PC-3 (cell line): ENCODE measurements at regions of chr19 and their contacts with region 1.

Region 1: GRCh38 chr19:11137542-11138384 is 17.8 kb downstream of the SPC24 start:
- DNase-seq: peak; percentile 99
- ATAC-seq: peak; percentile 32
- H3K4me3 ChIP-seq: peak overlapping the region; percentile 47
- H3K27ac ChIP-seq: peak overlapping the region; percentile 90
- H3K4me1 ChIP-seq: peaks cover 43% of the 10 kb centered on the region
- H3K27me3 ChIP-seq: no peaks in the 10 kb centered on the region
- CTCF ChIP-seq: peak; percentile 96

Region 2: DNA sequence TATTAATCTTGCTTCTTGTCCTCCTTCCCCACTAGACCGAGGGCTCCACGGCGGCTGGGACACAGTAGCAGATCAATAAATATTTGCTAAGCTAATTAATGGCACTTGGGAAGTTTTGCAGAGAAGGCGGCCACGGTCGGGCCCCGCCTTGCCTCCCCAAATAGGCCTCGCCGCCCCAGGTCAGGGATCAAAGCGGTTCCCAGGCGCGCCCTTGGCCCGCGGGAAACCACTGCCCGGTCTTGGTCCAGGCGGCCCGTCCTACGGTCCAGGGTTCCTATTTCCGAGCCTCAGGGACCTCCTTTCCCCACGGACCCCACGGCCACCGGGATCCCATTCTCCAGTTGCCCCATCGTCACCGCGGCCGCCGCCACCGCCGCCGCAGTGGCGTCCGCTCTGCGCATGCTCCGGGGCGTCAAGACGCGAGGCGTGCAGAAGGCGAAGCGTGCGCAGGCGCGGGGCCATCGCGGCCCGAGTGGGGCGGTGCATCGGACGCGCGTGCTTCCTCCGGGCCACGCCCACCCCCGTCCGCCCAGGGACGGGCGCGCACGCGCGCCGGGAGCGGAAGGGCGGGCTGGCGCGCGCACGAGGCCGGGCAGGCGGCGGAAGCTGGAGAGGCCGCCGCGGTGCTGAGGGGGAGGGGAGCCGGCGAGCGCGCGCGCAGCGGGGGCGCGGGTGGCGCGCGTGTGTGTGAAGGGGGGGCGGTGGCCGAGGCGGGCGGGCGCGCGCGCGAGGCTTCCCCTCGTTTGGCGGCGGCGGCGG is 177.3 kb before region 1 on chr19 and contains the start of gene SMARCA4:
- CTCF ChIA-PET with region 1: no interaction called
- POLR2A ChIA-PET with region 1: no interaction called
- intact Hi-C with region 1: no loop called
- DNase-seq: peak; percentile 99
- ATAC-seq: peak; percentile 84
- H3K4me3 ChIP-seq: peak within 1 kb of the TSS; percentile 82
- H3K27ac ChIP-seq: peak within 1 kb of the TSS; percentile 45
- H3K4me1 ChIP-seq: peaks cover 23% of the 10 kb centered on the region
- H3K27me3 ChIP-seq: no peaks in the 10 kb centered on the region
- CTCF ChIP-seq: no peak
- total RNA-seq, gene SMARCA4: 197 and 316 TPM in 2 replicates

Region 3: GRCh38 chr19:11155373-11156120 is 17.8 kb after region 1 on chr19 and contains the start of gene SPC24:
- CTCF ChIA-PET with region 1: interaction called, 6 read pairs
- POLR2A ChIA-PET with region 1: interaction called, 7 read pairs
- intact Hi-C with region 1: loop called (anchors 1 kb)
- DNase-seq: peak; percentile 99
- ATAC-seq: peak; percentile 94
- H3K4me3 ChIP-seq: peak within 1 kb of the TSS; percentile 94
- H3K27ac ChIP-seq: peak within 1 kb of the TSS; percentile 35
- H3K4me1 ChIP-seq: peaks cover 28% of the 10 kb centered on the region
- H3K27me3 ChIP-seq: no peaks in the 10 kb centered on the region
- CTCF ChIP-seq: no peak
- total RNA-seq, gene SPC24: 136 and 142 TPM in 2 replicates

Region 4: DNA sequence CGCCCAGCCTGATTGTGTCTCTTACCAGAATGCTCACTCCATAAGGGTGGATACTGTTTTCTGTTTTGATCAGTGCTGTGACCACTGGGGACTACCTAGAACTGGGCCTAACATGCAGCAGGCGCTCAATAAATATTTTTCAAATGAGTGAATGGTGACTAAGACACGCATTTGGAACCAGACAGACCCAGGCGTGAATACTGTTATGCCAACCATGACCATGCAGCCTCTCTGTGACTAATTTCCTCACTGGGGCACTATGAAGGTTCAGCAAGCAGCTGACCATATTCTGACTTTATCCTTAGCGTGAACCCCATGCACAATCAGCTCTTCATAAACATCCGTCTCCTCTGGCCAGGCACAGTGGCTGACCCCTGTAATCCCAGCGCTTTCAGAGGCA is 30.8 kb after region 1 on chr19:
- CTCF ChIA-PET with region 1: no interaction called
- POLR2A ChIA-PET with region 1: no interaction called
- intact Hi-C with region 1: loop called (anchors 1 kb)
- DNase-seq: peak; percentile 99
- ATAC-seq: peak; percentile 97
- H3K4me3 ChIP-seq: no peak overlapping the region
- H3K27ac ChIP-seq: peak overlapping the region; percentile 76
- H3K4me1 ChIP-seq: peaks cover 18% of the 10 kb centered on the region
- H3K27me3 ChIP-seq: no peaks in the 10 kb centered on the region
- CTCF ChIP-seq: no peak

Region 5: GRCh38 chr19:11187441-11187840 is 49.7 kb after region 1 on chr19:
- CTCF ChIA-PET with region 1: no interaction called
- POLR2A ChIA-PET with region 1: no interaction called
- intact Hi-C with region 1: no loop called
- DNase-seq: no peak
- ATAC-seq: no peak
- H3K4me3 ChIP-seq: no peak overlapping the region
- H3K27ac ChIP-seq: no peak overlapping the region
- H3K4me1 ChIP-seq: no peaks in the 10 kb centered on the region
- H3K27me3 ChIP-seq: no peaks in the 10 kb centered on the region
- CTCF ChIP-seq: no peak

Region 6: DNA sequence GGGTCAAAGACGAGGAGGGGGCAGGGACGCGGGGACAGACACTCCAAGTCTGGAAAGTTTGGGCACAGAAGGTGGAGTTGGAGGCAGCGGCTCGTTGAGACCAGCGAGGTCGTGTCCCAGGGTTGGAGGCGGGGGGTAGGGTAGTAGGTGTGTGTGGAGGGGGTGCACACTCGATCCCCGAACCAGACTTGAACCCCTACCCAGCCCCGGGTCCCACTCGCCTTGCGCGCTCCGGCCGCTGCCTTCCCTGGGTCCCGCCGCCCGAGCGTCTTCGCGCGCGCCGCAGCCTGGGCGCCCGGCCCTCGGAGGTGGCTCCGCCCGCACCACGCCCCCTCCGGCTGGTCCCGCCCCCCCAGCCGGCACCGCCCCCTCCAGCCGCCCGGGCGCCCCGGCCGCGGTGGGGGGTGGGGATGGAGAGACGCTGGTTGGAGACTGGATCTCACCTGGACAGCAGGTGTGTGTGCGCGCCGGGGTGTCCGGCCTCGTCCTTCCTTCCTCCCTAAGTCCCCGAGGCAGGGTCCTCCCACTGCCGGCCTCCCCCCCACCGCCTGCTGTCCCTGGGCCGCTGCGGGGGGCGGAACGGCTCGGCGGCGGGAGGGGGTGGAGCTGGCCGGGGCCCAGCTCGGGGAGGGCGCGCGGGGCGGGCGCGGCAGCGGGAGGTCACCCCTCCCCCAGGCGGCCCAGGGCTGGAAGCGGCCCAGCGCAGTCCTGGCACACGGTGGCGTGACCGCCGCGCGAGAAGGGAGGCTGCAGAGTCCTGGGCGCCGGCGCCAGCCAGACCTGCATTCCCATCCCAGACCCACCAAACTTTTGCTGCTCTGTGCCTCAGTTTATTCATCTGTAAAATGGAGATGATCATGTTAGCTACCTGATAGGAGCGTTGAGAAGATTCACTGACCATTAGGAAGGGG is 59.8 kb after region 1 on chr19 and contains the start of gene KANK2:
- CTCF ChIA-PET with region 1: interaction called, 5 read pairs
- POLR2A ChIA-PET with region 1: no interaction called
- intact Hi-C with region 1: loop called (anchors 1 kb)
- DNase-seq: peak; percentile 91
- ATAC-seq: peak; percentile 81
- H3K4me3 ChIP-seq: peak within 1 kb of the TSS; percentile 98
- H3K27ac ChIP-seq: peak within 1 kb of the TSS; percentile 12
- H3K4me1 ChIP-seq: peaks cover 18% of the 10 kb centered on the region
- H3K27me3 ChIP-seq: no peaks in the 10 kb centered on the region
- CTCF ChIP-seq: no peak
- total RNA-seq, gene KANK2: 96.6 and 98.4 TPM in 2 replicates

Region 7: GRCh38 chr19:11203194-11204075 is 65.7 kb after region 1 on chr19:
- CTCF ChIA-PET with region 1: interaction called, 15 read pairs
- POLR2A ChIA-PET with region 1: interaction called, 20 read pairs
- intact Hi-C with region 1: loop called (anchors 1 kb)
- DNase-seq: peak; percentile 79
- ATAC-seq: peak; percentile 82
- H3K4me3 ChIP-seq: no peak overlapping the region
- H3K27ac ChIP-seq: peak overlapping the region; percentile 15; the same call in 1 of the 2 replicates
- H3K4me1 ChIP-seq: peaks cover 11% of the 10 kb centered on the region
- H3K27me3 ChIP-seq: no peaks in the 10 kb centered on the region
- CTCF ChIP-seq: peak; percentile 90

Region 8: DNA sequence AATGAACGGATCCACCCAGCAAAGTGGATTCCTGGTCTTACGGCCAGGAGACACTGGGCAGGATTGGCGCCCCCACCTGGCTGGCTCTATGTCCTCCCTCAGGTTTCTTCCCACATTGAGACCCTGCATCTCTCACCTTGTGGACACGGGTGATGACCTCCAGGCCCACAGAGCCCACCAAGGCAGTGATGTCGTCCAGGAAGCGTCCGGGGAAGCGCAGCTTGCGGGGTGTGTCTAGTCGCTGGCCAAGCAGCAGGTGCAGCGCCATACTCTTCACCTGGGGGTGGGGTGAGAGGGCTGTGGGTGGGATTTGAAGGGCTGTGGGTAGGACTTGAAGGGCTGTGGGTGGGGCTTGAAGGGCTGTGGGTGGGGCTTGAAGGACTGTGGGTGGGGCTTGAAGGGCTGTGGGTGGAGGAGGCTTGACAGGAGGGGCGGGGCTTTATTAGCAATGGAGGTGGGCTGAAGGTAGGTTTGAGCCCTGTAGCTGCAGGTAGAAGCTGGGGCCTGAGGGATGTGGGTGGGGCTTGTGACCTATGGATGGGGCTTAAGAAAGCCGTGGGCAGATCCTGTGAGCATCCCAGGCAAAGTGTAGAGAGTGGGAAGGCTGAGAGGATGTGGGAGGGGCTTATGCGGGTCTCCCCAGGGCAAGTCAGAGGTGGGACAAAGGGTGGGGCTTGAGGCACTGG is 89.6 kb after region 1 on chr19:
- CTCF ChIA-PET with region 1: interaction called, 22 read pairs
- POLR2A ChIA-PET with region 1: no interaction called
- intact Hi-C with region 1: no loop called
- DNase-seq: peak; percentile 42
- ATAC-seq: peak; percentile 65
- H3K4me3 ChIP-seq: no peak overlapping the region
- H3K27ac ChIP-seq: no peak overlapping the region
- H3K4me1 ChIP-seq: no peaks in the 10 kb centered on the region
- H3K27me3 ChIP-seq: no peaks in the 10 kb centered on the region
- CTCF ChIP-seq: peak; percentile 75

Region 9: DNA sequence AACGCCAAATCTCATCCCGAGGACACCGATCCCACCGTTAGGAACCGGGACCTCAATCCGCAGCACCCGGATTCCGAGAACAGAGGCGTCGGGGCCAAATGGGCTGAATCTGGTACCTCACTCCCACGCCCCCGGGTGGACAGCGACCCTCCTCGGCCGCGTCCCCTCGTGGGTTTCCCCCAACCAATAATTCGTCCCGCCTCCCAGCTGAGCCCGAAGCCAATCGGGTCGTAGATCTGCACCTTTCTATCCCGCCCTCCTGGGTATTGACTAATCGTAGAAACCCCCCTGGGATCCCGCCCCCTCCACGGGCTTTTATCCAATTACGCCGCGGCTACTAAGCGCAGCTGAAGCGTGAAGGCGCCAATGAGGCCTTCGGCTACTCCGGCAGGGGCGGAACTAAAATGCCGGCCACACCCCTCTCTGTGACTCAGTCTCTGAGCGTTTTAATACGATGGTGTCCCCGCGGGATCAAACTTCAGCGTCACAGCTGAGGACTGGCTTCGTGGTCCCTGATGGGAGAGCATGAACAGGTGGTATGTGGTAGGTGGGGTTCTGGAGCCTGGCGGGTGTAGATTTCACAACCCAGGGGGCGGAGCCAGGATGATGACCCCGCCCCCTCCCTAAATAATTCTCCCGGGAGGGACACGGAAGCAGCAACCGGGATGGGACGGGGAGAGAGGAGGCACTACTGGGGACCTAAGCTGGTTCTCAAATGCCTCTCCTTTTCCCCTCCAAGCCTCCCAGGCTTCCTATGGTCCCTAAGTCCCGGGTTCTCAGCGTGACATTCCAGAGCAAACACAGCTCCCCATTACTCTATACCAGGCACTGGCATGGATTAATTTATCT is 208.6 kb after region 1 on chr19 and contains the starts of genes CCDC159 and TMEM205:
- CTCF ChIA-PET with region 1: no interaction called
- POLR2A ChIA-PET with region 1: interaction called, 24 read pairs
- intact Hi-C with region 1: no loop called
- DNase-seq: peak; percentile 100
- ATAC-seq: peak; percentile 82
- H3K4me3 ChIP-seq: peak within 1 kb of the TSS; percentile 80
- H3K27ac ChIP-seq: peak within 1 kb of the TSS; percentile 72
- H3K4me1 ChIP-seq: peaks cover 36% of the 10 kb centered on the region
- H3K27me3 ChIP-seq: no peaks in the 10 kb centered on the region
- CTCF ChIP-seq: 0 out of 2 replicates have a peak, but pooled peaks have one; percentile 24
- total RNA-seq, gene CCDC159: 10.3 and 14.5 TPM in 2 replicates
- total RNA-seq, gene TMEM205: 202 and 224 TPM in 2 replicates